ENCODE measurements at regions of chr2 and their contacts with region 1.

Region 1: DNA sequence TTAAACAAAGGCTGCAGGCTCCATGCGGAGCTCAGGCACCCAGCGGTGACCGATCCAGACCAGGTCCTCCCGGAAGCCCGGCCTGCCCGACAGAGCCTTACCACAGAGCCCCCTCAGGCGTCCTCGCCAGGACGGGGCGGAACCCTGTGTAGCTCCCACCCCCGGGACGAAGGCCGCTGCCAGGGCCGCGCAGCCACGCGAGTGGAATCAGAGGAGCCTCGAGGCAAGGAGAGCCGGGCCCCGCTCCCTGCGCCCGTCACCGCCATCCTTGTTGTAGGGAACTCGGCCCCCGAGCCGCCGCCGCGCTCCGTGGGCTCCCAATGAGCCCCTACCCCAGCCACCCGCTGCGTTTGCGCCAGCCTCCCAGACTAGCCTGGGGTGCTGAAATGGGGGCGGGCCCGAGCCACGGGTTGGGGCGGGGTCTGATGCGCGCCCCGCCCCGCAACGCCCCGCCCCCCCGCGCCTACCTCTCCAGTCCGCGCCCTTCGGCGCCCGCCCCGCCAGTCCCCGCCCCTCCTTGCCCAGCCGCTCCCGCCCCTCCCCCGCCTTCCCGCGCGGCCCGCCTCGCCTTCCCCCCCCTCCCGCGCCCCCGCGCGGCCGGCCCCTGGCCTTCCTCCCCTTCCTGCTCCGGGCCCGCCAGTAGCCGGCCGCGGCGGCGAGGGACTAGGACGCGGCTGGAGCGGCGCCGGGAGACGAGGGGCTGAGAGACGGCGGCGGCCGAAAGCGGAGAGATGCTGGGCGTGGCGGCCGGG is at the start of gene LIMS1:
- DNase-seq: peak; percentile 68 to 91 (median 82)
- ATAC-seq: peak; percentile 91 to 97 (median 94)
- H3K4me3 ChIP-seq: peak within 1 kb of the TSS; percentile 81 to 90
- H3K4me3 Mint-ChIP-seq: peak within 1 kb of the TSS; percentile 88 to 93 (median 92)
- H3K27ac ChIP-seq: peak within 1 kb of the TSS; percentile 29
- H3K27ac Mint-ChIP-seq: peak within 1 kb of the TSS; percentile 73 to 82
- H3K4me1 ChIP-seq: peaks cover 8 to 22% of the 10 kb centered on the region in 2 experiments
- H3K4me1 Mint-ChIP-seq: peaks cover 35 to 40% (median 35%) of the 10 kb centered on the region in 3 donors
- H3K27me3 ChIP-seq: no peaks in the 10 kb centered on the region
- H3K27me3 Mint-ChIP-seq: no peaks in the 10 kb centered on the region
- total RNA-seq, gene LIMS1: 55.5 to 82.8 (median 56.9) TPM

Region 2: DNA sequence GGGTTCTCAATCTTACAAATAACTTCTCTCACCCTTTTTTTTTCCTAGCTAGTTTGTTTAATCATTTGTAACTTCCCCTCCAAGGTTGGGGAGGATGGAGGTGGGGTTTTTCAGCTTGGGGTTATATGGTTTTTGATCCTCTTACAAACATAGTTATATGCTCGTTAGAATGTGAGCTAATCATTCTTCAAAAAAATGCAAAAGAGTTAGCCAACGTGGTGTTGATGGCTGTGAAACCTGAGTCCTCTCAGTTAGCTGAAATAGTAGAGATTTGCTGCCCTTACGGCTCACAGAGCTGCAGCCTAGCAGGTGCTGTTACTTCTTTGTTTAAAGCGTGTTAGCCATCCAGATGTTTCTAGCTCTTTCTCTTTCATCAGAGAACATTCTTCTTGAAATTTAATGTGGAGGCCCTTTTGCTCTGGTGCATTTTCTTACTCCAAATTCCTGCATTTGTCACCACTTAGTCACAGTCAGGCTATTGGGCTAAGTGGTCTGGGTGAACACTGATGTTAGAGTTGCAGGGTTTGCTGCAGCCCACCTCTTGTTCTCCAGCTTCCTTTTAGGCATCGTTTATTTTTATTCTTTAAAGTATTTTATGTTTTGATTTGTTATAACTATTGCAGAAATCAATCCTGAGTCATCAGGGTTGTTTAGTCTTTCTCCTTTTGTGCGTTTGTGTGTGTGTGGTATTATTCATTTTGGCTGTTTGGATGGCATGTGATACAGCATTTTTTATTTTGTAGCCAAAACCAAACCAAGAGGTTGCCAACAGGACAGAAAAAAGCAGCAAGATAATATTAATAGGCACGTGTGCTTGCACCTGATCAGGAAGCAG is 41.3 kb after region 1 on chr2:
- CTCF ChIA-PET with region 1: no interaction called
- POLR2A ChIA-PET with region 1: interaction called in 1 of 2 experiments, 10 read pairs
- DNase-seq: no peak
- ATAC-seq: no peak
- H3K4me3 ChIP-seq: no peak overlapping the region
- H3K4me3 Mint-ChIP-seq: no peak overlapping the region
- H3K27ac ChIP-seq: no peak overlapping the region
- H3K27ac Mint-ChIP-seq: no peak overlapping the region
- H3K4me1 ChIP-seq: peaks cover 0 to 5% of the 10 kb centered on the region in 2 experiments
- H3K4me1 Mint-ChIP-seq: peaks cover 9 to 12% (median 10%) of the 10 kb centered on the region in 3 donors
- H3K27me3 ChIP-seq: no peaks in the 10 kb centered on the region
- H3K27me3 Mint-ChIP-seq: no peaks in the 10 kb centered on the region

Measured in T-cell (primary cell).